Breast epithelium (tissue), 4 donors: ENCODE measurements at regions of chr14 and their contacts with region 1.

Region 1: DNA sequence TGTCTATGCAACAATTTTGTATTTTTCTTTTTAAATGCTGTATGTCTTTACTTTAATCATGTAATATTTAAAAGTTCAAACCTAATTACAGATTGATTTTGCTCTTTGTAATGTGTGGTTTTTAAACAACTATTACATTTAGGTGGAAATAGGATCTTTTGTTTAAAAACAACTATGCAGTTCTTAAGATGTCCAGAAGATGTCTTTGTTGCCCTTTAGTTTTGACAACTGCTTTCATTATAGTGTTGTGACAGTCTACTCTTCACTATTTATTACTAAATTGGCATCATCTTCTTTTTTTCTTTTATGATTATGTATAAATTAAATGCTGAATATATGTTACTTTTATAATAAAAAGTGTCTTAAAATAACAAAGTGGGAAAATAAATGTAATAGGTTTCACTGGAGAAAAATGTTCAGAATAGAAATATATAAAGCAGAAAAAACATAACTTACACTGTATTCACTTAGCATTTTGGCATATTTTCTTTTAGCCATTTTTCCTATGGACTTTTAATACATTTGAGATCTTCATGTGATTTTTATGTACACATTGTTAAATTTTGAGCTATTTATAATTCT is 27.1 kb upstream of the PCNX4 start:
- DNase-seq: no peak
- H3K4me3 ChIP-seq: no peak overlapping the region
- H3K27ac ChIP-seq: no peak overlapping the region
- H3K4me1 ChIP-seq: no peaks in the 10 kb centered on the region
- H3K27me3 ChIP-seq: no peaks in the 10 kb centered on the region
- CTCF ChIP-seq: peak in 2 of 3 donors; percentile 45 to 53
- POLR2A ChIP-seq: no peak

Region 2: DNA sequence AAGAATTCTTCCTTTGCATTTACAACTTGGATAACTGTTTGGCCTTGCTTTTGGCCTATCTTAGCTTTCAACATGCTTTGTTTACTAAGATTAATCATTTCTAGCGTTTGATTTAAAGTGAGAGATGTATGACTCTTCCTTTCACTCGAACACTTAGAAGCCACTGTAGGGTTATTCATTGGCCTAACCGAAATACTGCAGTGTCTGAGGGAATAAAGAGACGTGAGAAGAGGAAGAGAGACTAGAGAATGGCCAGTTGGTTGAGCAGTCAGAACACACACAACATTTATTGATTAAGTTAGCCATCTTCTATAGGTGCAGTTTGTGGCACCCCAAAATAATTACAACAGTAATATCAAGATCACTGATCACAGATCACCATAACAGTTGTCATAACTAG is 425.7 kb before region 1 on chr14:
- intact Hi-C with region 1: no loop called
- DNase-seq: no peak
- H3K4me3 ChIP-seq: no peak overlapping the region
- H3K27ac ChIP-seq: no peak overlapping the region
- H3K4me1 ChIP-seq: no peaks in the 10 kb centered on the region
- H3K27me3 ChIP-seq: no peaks in the 10 kb centered on the region
- CTCF ChIP-seq: no peak
- POLR2A ChIP-seq: no peak

Region 3: GRCh38 chr14:60008042-60008441 is 56.5 kb before region 1 on chr14:
- intact Hi-C with region 1: loop called (anchors 2 kb)
- DNase-seq: no peak
- H3K4me3 ChIP-seq: no peak overlapping the region
- H3K27ac ChIP-seq: no peak overlapping the region
- H3K4me1 ChIP-seq: no peaks in the 10 kb centered on the region
- H3K27me3 ChIP-seq: no peaks in the 10 kb centered on the region
- CTCF ChIP-seq: no peak
- POLR2A ChIP-seq: no peak

Region 4: GRCh38 chr14:60079724-60080123 is 15.1 kb after region 1 on chr14:
- intact Hi-C with region 1: no loop called
- DNase-seq: no peak
- H3K4me3 ChIP-seq: no peak overlapping the region
- H3K27ac ChIP-seq: no peak overlapping the region
- H3K4me1 ChIP-seq: no peaks in the 10 kb centered on the region
- H3K27me3 ChIP-seq: no peaks in the 10 kb centered on the region
- CTCF ChIP-seq: no peak
- POLR2A ChIP-seq: no peak

Region 5: GRCh38 chr14:60184146-60184904 is 119.7 kb after region 1 on chr14:
- intact Hi-C with region 1: loop called (anchors 10 kb)
- DNase-seq: no peak
- H3K4me3 ChIP-seq: peak overlapping the region; percentile 37 to 58 (median 42)
- H3K27ac ChIP-seq: peak overlapping the region in 1 of 2 donors; percentile 5
- H3K4me1 ChIP-seq: no peaks in the 10 kb centered on the region
- H3K27me3 ChIP-seq: no peaks in the 10 kb centered on the region
- CTCF ChIP-seq: peak; percentile 73 to 82 (median 81)
- POLR2A ChIP-seq: no peak